Tibial artery (tissue), 4 donors: ENCODE measurements at regions of chr5 and their contacts with region 1.

Region 1: GRCh38 chr5:168987543-168988300 is 313.2 kb downstream of the SLIT3 start:
- DNase-seq: peak; percentile 80 to 82
- H3K4me3 ChIP-seq: no peak overlapping the region
- H3K27ac ChIP-seq: peak overlapping the region in 1 of 2 donors; percentile 2
- H3K4me1 ChIP-seq: peaks cover 0 to 49% (median 33%) of the 10 kb centered on the region in 4 donors
- H3K27me3 ChIP-seq: no peaks in the 10 kb centered on the region
- CTCF ChIP-seq: peak; percentile 84 to 87

Region 2: GRCh38 chr5:168679515-168679920 is 308.2 kb before region 1 on chr5:
- intact Hi-C with region 1: loop called (anchors 10 kb)
- DNase-seq: peak; percentile 70 to 81
- H3K4me3 ChIP-seq: no peak overlapping the region
- H3K27ac ChIP-seq: peak overlapping the region in 1 of 2 donors; percentile 78
- H3K4me1 ChIP-seq: peaks cover 0 to 30% (median 15%) of the 10 kb centered on the region in 4 donors
- H3K27me3 ChIP-seq: no peaks in the 10 kb centered on the region
- CTCF ChIP-seq: peak; percentile 81 to 90

Region 3: GRCh38 chr5:169116961-169117461 is 129.3 kb after region 1 on chr5:
- intact Hi-C with region 1: no loop called
- DNase-seq: peak; percentile 84 to 85
- H3K4me3 ChIP-seq: no peak overlapping the region
- H3K27ac ChIP-seq: peak overlapping the region; percentile 70 to 75
- H3K4me1 ChIP-seq: peaks cover 0 to 48% (median 21%) of the 10 kb centered on the region in 4 donors
- H3K27me3 ChIP-seq: no peaks in the 10 kb centered on the region
- CTCF ChIP-seq: peak in 1 of 2 experiments; percentile 28

Region 4: DNA sequence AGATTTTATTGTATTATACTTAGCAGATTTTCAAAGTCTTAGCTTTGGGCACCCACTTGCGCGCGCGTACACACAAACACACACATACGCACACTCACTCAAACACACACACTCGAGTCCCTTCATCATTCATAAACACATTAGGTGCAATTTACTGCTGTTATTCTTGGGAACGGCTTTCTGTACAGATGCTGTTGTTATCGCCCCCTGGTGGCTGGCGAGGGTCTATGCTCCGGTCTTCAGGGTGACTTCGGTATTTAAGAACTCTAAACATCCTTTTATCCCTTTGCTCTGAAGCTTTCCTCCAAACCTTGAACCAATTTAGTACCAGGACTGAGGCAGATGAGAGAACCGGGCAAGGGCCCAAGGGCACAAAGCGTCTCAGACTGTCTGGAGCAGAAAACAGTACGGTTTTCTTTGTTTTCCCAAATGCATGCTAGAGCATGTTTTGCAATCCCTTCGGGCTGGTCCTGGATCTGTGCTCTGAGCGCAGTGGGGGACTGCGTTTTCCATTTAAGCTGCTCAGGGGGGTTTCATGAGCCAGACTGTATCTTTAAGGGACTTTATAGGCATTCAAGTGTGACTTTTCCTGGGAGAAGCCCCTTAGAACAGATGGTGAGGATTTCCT is 314.9 kb after region 1 on chr5:
- intact Hi-C with region 1: loop called (anchors 2 kb)
- DNase-seq: peak; percentile 74 to 80
- H3K4me3 ChIP-seq: peak overlapping the region in 1 of 2 donors; percentile 75
- H3K27ac ChIP-seq: peak overlapping the region in 1 of 2 donors; percentile 91
- H3K4me1 ChIP-seq: peaks cover 0 to 35% (median 22%) of the 10 kb centered on the region in 4 donors
- H3K27me3 ChIP-seq: no peaks in the 10 kb centered on the region
- CTCF ChIP-seq: peak; percentile 92

Region 5: DNA sequence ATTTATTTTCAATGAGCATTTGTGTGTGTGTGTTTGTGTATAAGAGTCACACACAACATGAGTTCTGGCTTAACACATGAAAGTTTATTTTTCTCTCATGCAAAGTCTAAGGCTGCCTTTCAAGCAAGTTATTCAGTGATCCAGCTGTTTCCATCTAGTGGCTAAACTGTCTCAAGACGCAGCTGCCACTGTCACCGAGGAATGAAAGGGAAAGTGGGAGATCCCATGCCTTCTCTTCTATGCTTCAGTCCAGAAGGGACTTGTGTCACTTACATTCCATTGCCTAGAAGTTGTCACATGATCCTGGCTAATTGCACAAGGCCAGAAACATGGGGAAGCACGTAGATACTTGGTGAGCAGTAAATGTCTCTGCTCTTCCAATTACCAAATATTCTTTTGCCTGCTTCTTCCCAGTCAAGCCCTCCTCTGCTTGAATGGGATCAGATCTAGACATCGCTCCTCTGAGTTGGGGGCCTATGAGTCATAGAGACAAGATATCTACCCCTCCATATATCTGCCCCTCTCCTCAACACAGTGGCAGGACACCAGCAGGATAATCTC is 343.6 kb after region 1 on chr5:
- intact Hi-C with region 1: no loop called
- DNase-seq: no peak
- H3K4me3 ChIP-seq: no peak overlapping the region
- H3K27ac ChIP-seq: no peak overlapping the region
- H3K4me1 ChIP-seq: peaks cover 0 to 5% (median 0%) of the 10 kb centered on the region in 4 donors
- H3K27me3 ChIP-seq: no peaks in the 10 kb centered on the region
- CTCF ChIP-seq: peak; percentile 8 to 11

Region 6: GRCh38 chr5:169554251-169554650 is 566.5 kb after region 1 on chr5:
- intact Hi-C with region 1: loop called (anchors 2 kb)
- DNase-seq: no peak
- H3K4me3 ChIP-seq: no peak overlapping the region
- H3K27ac ChIP-seq: no peak overlapping the region
- H3K4me1 ChIP-seq: no peaks in the 10 kb centered on the region
- H3K27me3 ChIP-seq: no peaks in the 10 kb centered on the region
- CTCF ChIP-seq: no peak